Tibial artery (tissue), 4 donors: ENCODE measurements at regions of chr9 and their contacts with region 1.

Region 1: GRCh38 chr9:137129456-137130175 is 9.3 kb upstream of the GRIN1 start:
- DNase-seq: peak; percentile 53 to 77
- H3K4me3 ChIP-seq: peak overlapping the region; percentile 51 to 60
- H3K27ac ChIP-seq: no peak overlapping the region
- H3K4me1 ChIP-seq: peaks cover 0 to 32% (median 19%) of the 10 kb centered on the region in 4 donors
- H3K27me3 ChIP-seq: peaks cover 0 to 50% of the 10 kb centered on the region in 2 donors
- CTCF ChIP-seq: no peak

Region 2: GRCh38 chr9:137116728-137117127 is 12.9 kb before region 1 on chr9:
- intact Hi-C with region 1: loop called (anchors 1 kb)
- DNase-seq: no peak
- H3K4me3 ChIP-seq: no peak overlapping the region
- H3K27ac ChIP-seq: no peak overlapping the region
- H3K4me1 ChIP-seq: peaks cover 0 to 19% (median 13%) of the 10 kb centered on the region in 4 donors
- H3K27me3 ChIP-seq: peaks cover 0 to 40% of the 10 kb centered on the region in 2 donors
- CTCF ChIP-seq: no peak